Activated naive CD8-positive, alpha-beta T cell treated with anti-CD3 and anti-CD28 coated beads, Interleukin-2, amount 10 ng/mL, durations not matched to agents 7 days and 5 days (primary cell): ENCODE measurements at regions of chr2 and their contacts with region 1.

Region 1: GRCh38 chr2:74529357-74530238 is at the starts of genes AUP1 and HTRA2:
- DNase-seq: peak; percentile 93
- ATAC-seq: peak; percentile 91
- H3K4me3 Mint-ChIP-seq: peak within 1 kb of the TSS; percentile 97
- H3K27ac Mint-ChIP-seq: peak within 1 kb of the TSS; percentile 96
- H3K4me1 Mint-ChIP-seq: peaks cover 38% of the 10 kb centered on the region
- H3K27me3 Mint-ChIP-seq: no peaks in the 10 kb centered on the region
- total RNA-seq, gene AUP1: 126 to 127 TPM
- total RNA-seq, gene HTRA2: 46.6 to 47.4 TPM

Region 2: GRCh38 chr2:74472086-74472944 is 57.3 kb before region 1 on chr2 and contains the start of gene MRPL53:
- POLR2A ChIA-PET with region 1: interaction called, 13 read pairs
- DNase-seq: peak; percentile 98
- ATAC-seq: peak; percentile 92
- H3K4me3 Mint-ChIP-seq: peak within 1 kb of the TSS; percentile 93
- H3K27ac Mint-ChIP-seq: peak within 1 kb of the TSS; percentile 91
- H3K4me1 Mint-ChIP-seq: peaks cover 14% of the 10 kb centered on the region
- H3K27me3 Mint-ChIP-seq: no peaks in the 10 kb centered on the region
- total RNA-seq, gene MRPL53: 91.6 to 92.1 TPM

Region 3: GRCh38 chr2:74514368-74515270 is 15.0 kb before region 1 on chr2 and contains the start of gene TLX2:
- POLR2A ChIA-PET with region 1: interaction called, 10 read pairs
- DNase-seq: peak; percentile 54
- ATAC-seq: peak; percentile 16
- H3K4me3 Mint-ChIP-seq: peak within 1 kb of the TSS; percentile 78
- H3K27ac Mint-ChIP-seq: peak within 1 kb of the TSS; percentile 62
- H3K4me1 Mint-ChIP-seq: peaks cover 20% of the 10 kb centered on the region
- H3K27me3 Mint-ChIP-seq: peaks cover 75% of the 10 kb centered on the region
- total RNA-seq, gene TLX2: 0.69 to 0.88 TPM

Region 4: GRCh38 chr2:74573747-74574562 is 44.4 kb after region 1 on chr2:
- POLR2A ChIA-PET with region 1: no interaction called
- DNase-seq: no peak
- ATAC-seq: peak; percentile 95
- H3K4me3 Mint-ChIP-seq: peak overlapping the region; percentile 69
- H3K27ac Mint-ChIP-seq: peak overlapping the region; percentile 73
- H3K4me1 Mint-ChIP-seq: peaks cover 27% of the 10 kb centered on the region
- H3K27me3 Mint-ChIP-seq: no peaks in the 10 kb centered on the region

Region 5: DNA sequence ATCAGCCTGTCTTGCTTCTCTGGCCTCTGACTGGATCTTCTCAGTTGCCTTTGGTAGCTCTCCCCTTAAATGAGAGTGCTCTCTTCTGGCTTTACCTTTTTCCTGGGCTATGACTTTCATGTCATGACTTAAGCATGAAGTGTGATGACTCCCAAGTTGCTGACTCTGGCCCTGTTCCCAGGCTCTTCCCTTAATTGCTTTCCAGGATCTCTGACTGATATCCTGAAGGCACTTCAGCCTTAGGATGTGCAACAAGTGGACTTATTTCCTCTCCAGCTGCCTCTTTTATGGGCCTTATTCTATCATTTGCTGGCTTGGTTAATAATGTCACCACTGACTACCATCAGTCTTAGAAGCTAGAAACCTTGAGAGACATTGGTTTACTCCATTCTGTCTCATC is 141.9 kb after region 1 on chr2:
- POLR2A ChIA-PET with region 1: no interaction called
- DNase-seq: no peak
- ATAC-seq: no peak
- H3K4me3 Mint-ChIP-seq: no peak overlapping the region
- H3K27ac Mint-ChIP-seq: no peak overlapping the region
- H3K4me1 Mint-ChIP-seq: no peaks in the 10 kb centered on the region
- H3K27me3 Mint-ChIP-seq: no peaks in the 10 kb centered on the region

Region 6: GRCh38 chr2:74690571-74690970 is 161.0 kb after region 1 on chr2:
- POLR2A ChIA-PET with region 1: no interaction called
- DNase-seq: no peak
- ATAC-seq: no peak
- H3K4me3 Mint-ChIP-seq: no peak overlapping the region
- H3K27ac Mint-ChIP-seq: no peak overlapping the region
- H3K4me1 Mint-ChIP-seq: no peaks in the 10 kb centered on the region
- H3K27me3 Mint-ChIP-seq: peaks cover 9% of the 10 kb centered on the region